ENCODE measurements at regions of chr12 and their contacts with region 1.

Region 1: GRCh38 chr12:66301944-66302826 is at the start of gene HELB:
- DNase-seq: peak; percentile 94
- H3K4me3 Mint-ChIP-seq: peak within 1 kb of the TSS; percentile 100
- H3K27ac Mint-ChIP-seq: peak within 1 kb of the TSS; percentile 99
- H3K4me1 Mint-ChIP-seq: peaks cover 61% of the 10 kb centered on the region
- H3K27me3 Mint-ChIP-seq: peaks cover 3% of the 10 kb centered on the region
- total RNA-seq, gene HELB: 20.5 and 21.5 TPM in 2 replicates

Region 2: DNA sequence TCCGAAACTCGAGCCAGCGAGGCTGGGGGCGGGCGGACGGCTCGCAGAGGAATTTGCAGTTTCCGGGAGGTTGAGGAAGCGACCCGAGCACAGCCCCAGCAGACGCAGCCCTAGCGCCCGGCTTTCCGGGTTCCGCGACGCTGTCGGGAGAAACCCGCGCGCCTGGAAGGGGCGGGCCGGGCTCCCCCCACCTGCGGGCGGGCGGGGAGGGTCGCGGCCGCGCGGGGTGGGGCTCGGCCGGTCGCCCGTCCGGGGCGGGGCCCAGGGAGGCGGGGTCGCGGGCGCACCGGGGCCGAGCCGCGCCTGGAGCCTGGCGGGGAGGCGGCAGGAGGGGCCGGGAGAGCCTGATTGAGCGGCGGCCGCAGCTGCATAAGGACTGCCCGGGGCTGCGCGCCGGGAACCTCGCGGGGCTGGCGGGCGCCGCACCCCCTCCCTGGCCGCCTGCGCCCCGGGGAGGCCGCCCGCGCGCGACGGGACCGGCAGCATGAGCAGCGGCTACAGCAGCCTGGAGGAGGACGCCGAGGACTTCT is 1692.0 kb before region 1 on chr12 and contains the start of gene RASSF3:
- intact Hi-C with region 1: loop called (anchors 5 kb)
- DNase-seq: peak; percentile 76
- H3K4me3 Mint-ChIP-seq: peak within 1 kb of the TSS; percentile 97
- H3K27ac Mint-ChIP-seq: peak within 1 kb of the TSS; percentile 98
- H3K4me1 Mint-ChIP-seq: peaks cover 47% of the 10 kb centered on the region
- H3K27me3 Mint-ChIP-seq: no peaks in the 10 kb centered on the region
- total RNA-seq, gene RASSF3: 37.1 and 38.3 TPM in 2 replicates

Region 3: DNA sequence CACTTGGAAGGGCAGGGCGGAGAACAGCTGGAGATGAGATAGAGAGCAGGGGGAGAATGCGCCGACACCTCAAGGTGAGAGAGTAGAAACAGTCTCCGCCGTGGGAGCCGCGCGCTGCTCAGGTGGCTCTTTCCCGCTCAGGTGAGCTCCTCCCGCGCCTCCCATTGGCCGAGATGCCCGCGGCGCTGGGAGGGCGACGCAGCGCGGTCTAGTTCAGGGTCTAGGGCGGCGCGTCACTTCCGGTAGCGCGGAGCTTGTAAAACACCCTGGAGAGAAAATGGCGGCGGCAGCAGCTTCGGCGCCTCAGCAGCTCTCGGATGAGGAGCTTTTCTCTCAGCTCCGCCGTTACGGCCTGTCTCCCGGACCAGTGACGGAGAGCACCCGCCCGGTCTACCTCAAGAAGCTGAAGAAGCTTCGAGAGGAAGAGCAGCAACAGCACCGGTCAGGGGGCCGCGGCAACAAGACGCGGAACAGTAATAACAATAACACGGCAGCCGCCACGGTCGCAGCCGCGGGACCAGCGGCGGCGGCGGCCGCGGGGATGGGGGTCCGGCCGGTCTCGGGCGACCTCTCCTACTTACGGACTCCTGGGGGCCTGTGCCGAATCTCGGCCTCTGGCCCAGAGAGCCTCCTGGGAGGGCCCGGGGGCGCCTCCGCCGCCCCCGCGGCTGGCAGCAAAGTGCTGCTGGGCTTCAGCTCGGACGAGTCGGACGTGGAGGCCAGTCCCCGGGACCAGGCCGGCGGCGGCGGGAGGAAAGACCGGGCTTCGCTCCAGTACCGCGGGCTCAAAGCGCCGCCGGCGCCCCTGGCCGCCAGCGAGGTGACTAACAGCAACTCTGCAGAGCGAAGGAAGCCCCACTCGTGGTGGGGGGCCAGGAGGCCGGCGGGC is 1132.6 kb before region 1 on chr12 and contains the start of gene LEMD3:
- intact Hi-C with region 1: loop called (anchors 10 kb)
- DNase-seq: peak; percentile 91
- H3K4me3 Mint-ChIP-seq: peak within 1 kb of the TSS; percentile 99
- H3K27ac Mint-ChIP-seq: peak within 1 kb of the TSS; percentile 94
- H3K4me1 Mint-ChIP-seq: peaks cover 7% of the 10 kb centered on the region
- H3K27me3 Mint-ChIP-seq: peaks cover 5% of the 10 kb centered on the region
- total RNA-seq, gene LEMD3: 26.5 and 34.6 TPM in 2 replicates

Region 4: GRCh38 chr12:66196806-66197205 is 105.4 kb before region 1 on chr12:
- intact Hi-C with region 1: loop called (anchors 2 kb)
- DNase-seq: no peak
- H3K4me3 Mint-ChIP-seq: peak overlapping the region; percentile 75
- H3K27ac Mint-ChIP-seq: peak overlapping the region; percentile 72
- H3K4me1 Mint-ChIP-seq: peaks cover 27% of the 10 kb centered on the region
- H3K27me3 Mint-ChIP-seq: peaks cover 2% of the 10 kb centered on the region

Region 5: GRCh38 chr12:66288121-66288520 is 14.1 kb before region 1 on chr12:
- intact Hi-C with region 1: loop called (anchors 1 kb)
- DNase-seq: peak; percentile 65
- H3K4me3 Mint-ChIP-seq: peak overlapping the region; percentile 11
- H3K27ac Mint-ChIP-seq: peak overlapping the region; percentile 72
- H3K4me1 Mint-ChIP-seq: peaks cover 66% of the 10 kb centered on the region
- H3K27me3 Mint-ChIP-seq: no peaks in the 10 kb centered on the region

Region 6: GRCh38 chr12:66636771-66637170 is 334.6 kb after region 1 on chr12:
- intact Hi-C with region 1: no loop called
- DNase-seq: no peak
- H3K4me3 Mint-ChIP-seq: no peak overlapping the region
- H3K27ac Mint-ChIP-seq: no peak overlapping the region
- H3K4me1 Mint-ChIP-seq: no peaks in the 10 kb centered on the region
- H3K27me3 Mint-ChIP-seq: no peaks in the 10 kb centered on the region

Measured in activated T-helper 1 cell treated with anti-CD3 and anti-CD28 coated beads, Interleukin-12 subunit alpha, Interleukin-12 subunit beta, Interleukin-2, Interleukin-4 antibody, amounts not matched to agents 30 ng/mL and 10 ng/mL and 1 ng/mL, durations not matched to agents 14 hours and 24 hours and 36 hours (primary cell).